Mammary epithelial cell (primary cell): ENCODE measurements at regions of chr2 and their contacts with region 1.

Region 1: DNA sequence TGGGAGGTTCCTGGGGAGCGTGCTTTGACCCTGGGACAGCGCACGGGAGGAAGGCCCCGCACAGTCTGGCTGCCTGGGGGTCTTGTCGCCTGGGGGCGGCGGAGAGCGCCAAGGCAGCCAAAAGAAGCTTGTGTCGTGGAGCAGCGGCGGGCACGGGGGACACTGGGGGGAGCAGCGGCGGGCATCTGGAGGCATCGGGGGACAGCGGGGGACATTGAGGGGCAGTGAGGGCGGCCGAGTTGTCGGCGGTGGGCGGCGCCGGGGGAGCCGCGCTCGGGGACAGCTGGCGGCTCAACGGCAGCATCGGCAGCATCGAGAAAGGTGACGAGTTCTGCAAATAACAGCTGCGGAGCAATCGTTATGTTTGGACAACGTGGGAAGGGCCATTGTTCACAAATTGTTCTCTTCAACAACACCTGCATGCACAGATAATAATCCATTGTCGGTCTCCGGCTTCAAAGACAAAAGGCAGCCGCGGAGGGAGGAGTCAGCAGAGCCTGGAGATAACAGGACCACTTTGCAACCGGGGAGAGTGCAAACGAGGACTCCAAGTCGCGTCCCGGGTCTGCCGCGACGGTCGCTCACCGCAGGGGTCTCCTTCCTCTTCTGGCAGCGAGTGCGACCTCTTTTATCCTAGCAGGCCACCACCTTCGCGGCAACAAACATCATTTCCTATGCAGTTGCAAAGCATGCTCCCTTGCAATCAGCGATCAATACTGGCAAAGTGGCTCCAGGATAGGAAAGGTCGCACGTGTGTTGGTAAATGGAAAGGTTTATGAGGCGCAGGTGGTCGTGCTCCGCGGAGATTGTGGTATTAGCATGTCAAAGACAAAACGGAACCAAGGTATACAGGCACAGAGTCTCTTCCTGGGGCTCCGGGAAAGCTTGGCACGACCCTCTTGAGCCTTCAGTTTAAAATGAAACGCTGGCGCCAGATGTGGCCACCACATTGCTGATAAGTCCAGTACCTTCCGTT is 132.3 kb upstream of the DLX2 start:
- DNase-seq: no peak
- H3K4me3 ChIP-seq: peak overlapping the region; percentile 3 to 23 (median 16)
- H3K27ac ChIP-seq: no peak overlapping the region
- H3K4me1 ChIP-seq: peaks cover 49% of the 10 kb centered on the region
- H3K27me3 ChIP-seq: no peaks in the 10 kb centered on the region
- CTCF ChIP-seq: no peak

Region 2: DNA sequence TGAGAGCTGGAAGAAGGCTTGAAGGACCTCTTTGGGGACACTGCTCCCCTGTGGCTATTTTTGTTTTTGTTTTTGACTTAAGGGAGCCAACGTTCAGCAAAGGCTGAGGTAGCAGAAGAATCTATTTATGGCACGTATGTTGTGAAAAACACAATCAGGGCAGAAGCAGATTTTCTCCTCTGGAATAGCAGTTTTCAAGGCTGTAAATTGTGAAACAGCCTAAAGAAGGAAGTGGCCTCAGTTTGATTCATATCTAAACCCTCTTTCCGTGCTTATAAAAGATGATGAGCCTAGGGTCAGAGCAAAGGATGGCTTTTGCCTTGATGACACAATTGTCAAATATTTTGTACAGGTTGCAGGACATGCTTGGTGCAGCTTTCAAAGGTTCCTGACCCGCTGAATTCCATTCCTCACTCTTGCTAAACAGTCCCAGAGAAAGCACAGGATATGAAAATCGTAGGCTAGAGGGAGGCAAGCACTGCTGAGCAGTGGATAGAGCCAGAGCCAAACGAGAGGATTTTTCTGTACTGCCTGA is 26.1 kb before region 1 on chr2:
- CTCF ChIA-PET with region 1: no interaction called
- dilution Hi-C with region 1: no loop called
- in situ Hi-C with region 1: no loop called
- intact Hi-C with region 1: loop called (anchors 2 kb)
- DNase-seq: peak; percentile 80
- H3K4me3 ChIP-seq: no peak overlapping the region
- H3K27ac ChIP-seq: peak overlapping the region; percentile 47
- H3K4me1 ChIP-seq: peaks cover 28% of the 10 kb centered on the region
- H3K27me3 ChIP-seq: no peaks in the 10 kb centered on the region
- CTCF ChIP-seq: peak in 1 of 2 donors; percentile 28

Region 3: DNA sequence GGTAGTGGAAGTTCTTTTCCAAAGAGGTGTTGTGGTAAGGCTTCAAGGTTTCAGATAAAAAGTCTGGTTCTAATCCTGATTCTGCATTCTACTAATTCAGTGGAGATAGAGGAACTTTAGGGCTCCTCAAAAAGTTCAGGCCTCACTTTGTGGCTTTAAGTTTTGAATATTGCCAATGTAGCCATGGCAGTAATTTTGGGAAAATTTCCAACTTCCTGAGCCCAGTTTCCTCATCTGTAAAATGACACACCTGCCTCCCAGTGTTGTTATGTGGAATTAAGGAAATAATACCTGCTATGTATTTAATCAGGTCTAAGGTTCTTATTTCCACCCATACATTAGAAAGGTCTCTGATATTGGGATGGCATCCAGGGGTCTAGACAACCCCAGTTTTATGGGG is 44.8 kb after region 1 on chr2:
- CTCF ChIA-PET with region 1: no interaction called
- dilution Hi-C with region 1: no loop called
- in situ Hi-C with region 1: no loop called
- intact Hi-C with region 1: loop called (anchors 5 kb)
- DNase-seq: peak; percentile 30
- H3K4me3 ChIP-seq: no peak overlapping the region
- H3K27ac ChIP-seq: no peak overlapping the region
- H3K4me1 ChIP-seq: peaks cover 39% of the 10 kb centered on the region
- H3K27me3 ChIP-seq: no peaks in the 10 kb centered on the region
- CTCF ChIP-seq: peak; percentile 9 to 38

Region 4: GRCh38 chr2:172350839-172351479 is 116.0 kb after region 1 on chr2:
- CTCF ChIA-PET with region 1: no interaction called
- dilution Hi-C with region 1: no loop called
- in situ Hi-C with region 1: no loop called
- intact Hi-C with region 1: no loop called
- DNase-seq: no peak
- H3K4me3 ChIP-seq: no peak overlapping the region
- H3K27ac ChIP-seq: no peak overlapping the region
- H3K4me1 ChIP-seq: no peaks in the 10 kb centered on the region
- H3K27me3 ChIP-seq: no peaks in the 10 kb centered on the region
- CTCF ChIP-seq: no peak